ENCODE measurements at regions of chr10 and their contacts with region 1.

Region 1: GRCh38 chr10:35834877-35835494 is 192.9 kb upstream of the FZD8 start:
- DNase-seq: no peak

Region 2: GRCh38 chr10:35642027-35642792 is 192.8 kb before region 1 on chr10 and contains the start of gene FZD8:
- intact Hi-C with region 1: loop called (anchors 5 kb)
- DNase-seq: peak; percentile 83 to 98 (median 90)

Region 3: DNA sequence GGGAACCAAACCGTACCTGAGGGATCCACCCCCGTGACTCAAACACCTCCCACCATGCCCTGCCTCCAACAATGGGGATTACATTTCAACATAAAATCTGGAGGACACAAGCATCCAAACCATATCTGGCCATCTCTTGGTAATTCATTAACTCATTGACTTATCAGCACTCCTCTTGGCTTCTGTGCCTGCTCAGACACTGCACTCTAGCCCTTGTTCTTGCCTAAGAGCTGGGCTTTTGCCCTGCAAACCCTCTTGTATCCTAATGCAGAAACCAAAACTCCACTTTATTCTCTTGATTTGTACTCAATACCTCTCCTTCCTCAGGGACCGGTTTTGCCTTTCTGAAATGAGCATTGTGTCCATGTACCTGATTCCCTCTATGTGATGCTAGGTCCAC is 137.3 kb after region 1 on chr10:
- intact Hi-C with region 1: no loop called
- DNase-seq: no peak